ENCODE measurements at regions of chr3 and their contacts with region 1.

Region 1: DNA sequence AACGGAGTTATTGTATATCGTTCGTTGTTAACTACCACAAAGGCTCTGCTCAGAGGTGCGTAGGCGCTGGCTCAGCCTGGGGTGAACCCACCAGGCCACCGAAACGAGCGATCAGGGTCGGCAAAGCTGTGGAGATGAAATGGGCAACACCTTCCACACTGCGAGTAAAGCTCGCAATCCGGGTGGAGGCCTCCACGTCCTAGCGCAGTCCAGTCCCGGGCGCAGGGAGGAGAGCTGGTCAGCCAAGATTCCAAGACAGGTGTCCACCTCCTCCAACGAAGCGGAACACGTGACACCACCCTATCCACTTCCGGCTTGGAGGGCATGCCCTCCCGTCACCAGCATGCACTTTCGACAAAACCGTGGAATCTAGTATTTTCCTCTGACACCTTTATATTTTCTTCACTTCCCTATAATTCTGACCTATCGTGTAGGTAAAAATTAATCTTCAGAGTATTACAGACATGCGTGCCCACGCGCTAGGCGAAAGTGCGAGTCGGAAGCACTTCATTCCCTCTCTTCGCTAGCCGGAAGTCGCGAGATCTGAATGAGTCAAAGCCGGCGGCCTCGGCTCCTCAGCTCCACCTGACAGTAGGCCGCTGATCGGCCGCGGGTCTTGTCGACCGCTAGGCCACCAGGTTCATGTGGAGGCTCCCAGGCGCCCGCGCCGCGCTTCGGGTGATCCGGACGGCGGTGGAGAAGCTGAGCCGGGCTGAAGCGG is at the start of gene PDE12:
- DNase-seq: peak; percentile 46 to 85
- H3K4me3 ChIP-seq: peak within 1 kb of the TSS; percentile 66 to 87 (median 75)
- H3K27ac ChIP-seq: peak within 1 kb of the TSS; percentile 78
- H3K4me1 ChIP-seq: peaks cover 0 to 4% (median 2%) of the 10 kb centered on the region in 4 experiments; a peak in 5 of 7 replicates
- H3K27me3 ChIP-seq: no peaks in the 10 kb centered on the region; a peak in 2 of 7 replicates
- CTCF ChIP-seq: peak in 1 of 3 experiments; percentile 21; a peak in 1 of 4 replicates
- EP300 ChIP-seq: peak; percentile 9 to 88; a peak in 1 of 3 replicates
- POLR2A ChIP-seq: peak; percentile 39 to 84
- RAD21 ChIP-seq: no peak; a peak in 1 of 4 replicates
- total RNA-seq, gene PDE12: 10.8 and 12.1 TPM in 2 replicates

Region 2: GRCh38 chr3:57141719-57142410 is 414.0 kb before region 1 on chr3:
- CTCF ChIA-PET with region 1: no interaction called
- POLR2A ChIA-PET with region 1: no interaction called
- DNase-seq: no peak
- H3K4me3 ChIP-seq: peak overlapping the region in 1 of 4 experiments; percentile 3; a peak in 2 of 8 replicates
- H3K27ac ChIP-seq: no peak overlapping the region
- H3K4me1 ChIP-seq: peaks cover 6 to 19% (median 12%) of the 10 kb centered on the region in 4 experiments; a peak in 6 of 7 replicates
- H3K27me3 ChIP-seq: no peaks in the 10 kb centered on the region
- CTCF ChIP-seq: peak in 2 of 3 experiments; percentile 1 to 3; a peak in 1 of 4 replicates
- EP300 ChIP-seq: no peak
- POLR2A ChIP-seq: no peak
- RAD21 ChIP-seq: peak; percentile 15 to 48; a peak in 3 of 4 replicates

Region 3: DNA sequence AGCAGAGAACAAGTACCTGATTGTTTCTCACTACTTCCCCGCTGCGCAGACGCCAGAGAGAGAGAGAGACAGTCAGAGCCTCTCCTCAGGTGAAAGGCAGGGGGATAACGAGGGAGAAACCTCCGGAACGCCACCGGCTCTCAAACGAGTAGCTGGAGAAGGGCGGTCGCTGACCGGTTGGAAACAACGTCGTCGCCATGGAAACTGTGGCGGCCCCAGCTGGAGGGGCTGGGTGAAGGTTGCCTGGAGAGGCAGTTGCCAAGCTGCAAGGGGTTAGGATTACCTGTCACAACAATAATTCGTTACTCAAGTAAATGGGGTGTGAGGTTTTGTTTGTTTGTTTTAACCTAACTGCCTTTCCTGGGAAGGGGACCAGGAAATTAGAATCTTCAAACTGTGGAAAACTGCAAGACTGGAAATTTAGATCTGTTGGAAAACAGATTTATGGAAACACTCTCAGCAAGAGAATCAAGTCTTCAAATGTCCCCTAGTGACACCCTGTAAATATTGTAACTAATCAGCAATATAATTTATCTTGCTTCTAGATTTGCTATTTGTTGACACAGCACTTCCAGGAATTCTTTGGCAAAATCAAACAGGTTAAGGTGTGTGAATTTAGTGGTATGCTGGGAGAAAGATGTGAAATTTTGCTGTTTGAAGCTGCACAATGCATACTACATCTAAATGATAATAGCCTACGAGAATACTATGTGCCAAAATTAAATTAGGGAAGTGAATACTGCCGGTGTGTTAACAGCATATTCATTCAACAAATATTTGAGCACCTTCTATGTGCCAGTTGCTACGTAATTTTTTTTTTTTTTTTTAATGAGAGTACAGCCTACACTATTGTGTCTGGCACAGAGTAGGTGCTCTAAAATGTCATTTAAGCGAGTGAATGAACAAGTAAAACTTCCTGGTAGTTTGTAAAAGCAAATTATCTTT is 11.4 kb before region 1 on chr3 and contains the start of gene DNAH12:
- CTCF ChIA-PET with region 1: no interaction called
- POLR2A ChIA-PET with region 1: interaction called, 10 read pairs
- DNase-seq: peak; percentile 78 to 91
- H3K4me3 ChIP-seq: peak within 1 kb of the TSS; percentile 0 to 40 (median 14); a peak in 5 of 8 replicates
- H3K27ac ChIP-seq: peak within 1 kb of the TSS; percentile 55; the same call in 1 of the 2 replicates
- H3K4me1 ChIP-seq: peaks cover 0 to 3% (median 1%) of the 10 kb centered on the region in 4 experiments; a peak in 1 of 7 replicates
- H3K27me3 ChIP-seq: no peaks in the 10 kb centered on the region
- CTCF ChIP-seq: no peak
- EP300 ChIP-seq: peak in 1 of 2 experiments; percentile 66; a peak in 1 of 3 replicates
- POLR2A ChIP-seq: no peak
- RAD21 ChIP-seq: peak; percentile 15 to 31; a peak in 3 of 4 replicates
- total RNA-seq, gene DNAH12: not detected in 2 replicates

Region 4: GRCh38 chr3:57569859-57570450 is 14.1 kb after region 1 on chr3:
- CTCF ChIA-PET with region 1: no interaction called
- POLR2A ChIA-PET with region 1: interaction called, 39 read pairs
- DNase-seq: no peak
- H3K4me3 ChIP-seq: no peak overlapping the region
- H3K27ac ChIP-seq: no peak overlapping the region
- H3K4me1 ChIP-seq: no peaks in the 10 kb centered on the region
- H3K27me3 ChIP-seq: no peaks in the 10 kb centered on the region
- CTCF ChIP-seq: no peak
- EP300 ChIP-seq: no peak
- POLR2A ChIP-seq: no peak
- RAD21 ChIP-seq: no peak